ENCODE measurements at regions of chr11 and their contacts with region 1.

Region 1: GRCh38 chr11:82996966-82997606 is 74.6 kb downstream of the RAB30 start:
- DNase-seq: no peak
- H3K4me3 ChIP-seq: no peak overlapping the region
- H3K27ac ChIP-seq: no peak overlapping the region
- H3K4me1 ChIP-seq: no peaks in the 10 kb centered on the region
- H3K27me3 ChIP-seq: no peaks in the 10 kb centered on the region
- CTCF ChIP-seq: no peak

Region 2: GRCh38 chr11:82842019-82842418 is 155.1 kb before region 1 on chr11:
- CTCF ChIA-PET with region 1: no interaction called
- POLR2A ChIA-PET with region 1: interaction called, 18 read pairs
- intact Hi-C with region 1: no loop called
- DNase-seq: no peak
- H3K4me3 ChIP-seq: no peak overlapping the region
- H3K27ac ChIP-seq: no peak overlapping the region
- H3K4me1 ChIP-seq: peaks cover 15% of the 10 kb centered on the region
- H3K27me3 ChIP-seq: no peaks in the 10 kb centered on the region
- CTCF ChIP-seq: no peak

Region 3: GRCh38 chr11:84012171-84012826 is 1015.2 kb after region 1 on chr11:
- CTCF ChIA-PET with region 1: interaction called, 10 read pairs
- POLR2A ChIA-PET with region 1: no interaction called
- intact Hi-C with region 1: no loop called
- DNase-seq: no peak
- H3K4me3 ChIP-seq: no peak overlapping the region
- H3K27ac ChIP-seq: no peak overlapping the region
- H3K4me1 ChIP-seq: no peaks in the 10 kb centered on the region
- H3K27me3 ChIP-seq: no peaks in the 10 kb centered on the region
- CTCF ChIP-seq: no peak